H1 (cell line): ENCODE measurements at regions of chr11 and their contacts with region 1.

Region 1: GRCh38 chr11:110479108-110480101 is 49.7 kb downstream of the FDX1 start:
- DNase-seq: no peak
- H3K4me3 ChIP-seq: no peak overlapping the region
- H3K27ac ChIP-seq: no peak overlapping the region
- H3K4me1 ChIP-seq: peaks cover 2 to 3% (median 3%) of the 10 kb centered on the region in 4 experiments; a peak in 6 of 7 replicates
- H3K27me3 ChIP-seq: no peaks in the 10 kb centered on the region
- CTCF ChIP-seq: no peak
- EP300 ChIP-seq: no peak
- POLR2A ChIP-seq: no peak
- RAD21 ChIP-seq: no peak

Region 2: DNA sequence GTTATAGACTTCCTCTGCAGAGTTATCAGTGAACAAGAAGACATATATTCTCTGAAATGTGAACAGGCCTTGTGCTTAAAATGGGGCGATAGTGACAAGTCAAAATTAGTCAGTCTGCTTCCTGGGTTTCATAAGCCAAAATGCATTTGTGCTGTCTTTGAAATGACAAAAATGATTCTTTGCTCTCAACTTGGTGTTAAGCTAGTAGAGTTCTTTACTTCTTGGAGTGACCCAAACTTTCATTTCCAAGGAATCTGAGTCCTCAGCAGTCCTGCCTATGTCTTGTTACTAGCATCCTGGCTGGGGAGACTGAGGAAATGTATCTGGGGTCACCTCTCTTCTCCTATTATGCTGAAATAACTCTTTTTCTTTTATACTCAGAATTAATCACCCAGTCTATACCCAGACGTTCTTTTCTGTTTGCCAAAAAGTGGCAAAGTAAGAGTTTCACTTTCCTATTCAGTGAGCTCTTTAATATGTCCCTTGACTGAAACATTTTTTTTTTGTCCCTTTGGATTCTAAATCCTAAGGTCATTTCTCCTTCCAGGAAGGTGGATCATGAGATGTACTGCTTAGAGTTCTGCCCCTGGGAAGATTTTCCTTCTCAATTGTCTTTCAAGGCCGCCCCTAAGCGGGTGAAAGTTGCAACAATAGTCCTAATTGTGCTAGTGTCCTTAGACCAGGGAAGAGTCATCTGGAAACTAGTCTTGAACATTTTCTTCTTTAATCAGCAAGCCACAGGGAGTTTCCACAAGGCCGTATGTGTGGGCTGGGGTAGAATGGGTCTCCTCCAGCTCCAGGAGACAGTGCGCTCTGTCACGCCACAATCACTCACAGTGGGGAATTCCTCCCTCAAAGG is 130.0 kb before region 1 on chr11:
- CTCF ChIA-PET with region 1: no interaction called
- POLR2A ChIA-PET with region 1: no interaction called
- DNase-seq: no peak
- H3K4me3 ChIP-seq: no peak overlapping the region
- H3K27ac ChIP-seq: no peak overlapping the region
- H3K4me1 ChIP-seq: no peaks in the 10 kb centered on the region
- H3K27me3 ChIP-seq: no peaks in the 10 kb centered on the region
- CTCF ChIP-seq: no peak
- EP300 ChIP-seq: no peak
- POLR2A ChIP-seq: no peak
- RAD21 ChIP-seq: no peak

Region 3: GRCh38 chr11:110455718-110456117 is 23.7 kb before region 1 on chr11:
- CTCF ChIA-PET with region 1: interaction called, 15 read pairs
- POLR2A ChIA-PET with region 1: no interaction called
- DNase-seq: no peak
- H3K4me3 ChIP-seq: no peak overlapping the region
- H3K27ac ChIP-seq: no peak overlapping the region
- H3K4me1 ChIP-seq: no peaks in the 10 kb centered on the region
- H3K27me3 ChIP-seq: no peaks in the 10 kb centered on the region
- CTCF ChIP-seq: no peak
- EP300 ChIP-seq: no peak
- POLR2A ChIP-seq: no peak
- RAD21 ChIP-seq: no peak

Region 4: DNA sequence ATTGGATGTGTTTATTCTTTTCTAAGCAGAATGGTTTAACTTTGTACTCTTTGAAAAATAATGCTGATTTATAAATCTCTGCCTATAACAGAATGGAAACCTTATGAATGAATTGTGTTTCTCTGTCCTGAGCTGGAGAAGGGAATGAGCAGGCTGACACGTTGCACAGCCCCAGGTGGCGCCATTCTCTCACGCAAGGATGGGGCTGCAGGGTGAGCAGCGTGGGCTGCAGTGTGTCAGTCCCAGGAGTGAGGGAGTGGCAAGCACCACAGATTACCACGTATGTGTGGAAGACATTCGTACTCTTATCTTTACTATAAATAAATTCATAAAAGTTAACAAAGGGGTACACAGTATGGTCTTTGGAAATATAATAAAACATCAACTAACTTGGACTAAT is 16.3 kb before region 1 on chr11:
- CTCF ChIA-PET with region 1: interaction called, 39 read pairs
- POLR2A ChIA-PET with region 1: no interaction called
- DNase-seq: peak; percentile 17 to 65
- H3K4me3 ChIP-seq: no peak overlapping the region
- H3K27ac ChIP-seq: no peak overlapping the region
- H3K4me1 ChIP-seq: no peaks in the 10 kb centered on the region
- H3K27me3 ChIP-seq: no peaks in the 10 kb centered on the region
- CTCF ChIP-seq: peak; percentile 63 to 80 (median 76)
- EP300 ChIP-seq: no peak
- POLR2A ChIP-seq: no peak
- RAD21 ChIP-seq: peak; percentile 82 to 87

Region 5: DNA sequence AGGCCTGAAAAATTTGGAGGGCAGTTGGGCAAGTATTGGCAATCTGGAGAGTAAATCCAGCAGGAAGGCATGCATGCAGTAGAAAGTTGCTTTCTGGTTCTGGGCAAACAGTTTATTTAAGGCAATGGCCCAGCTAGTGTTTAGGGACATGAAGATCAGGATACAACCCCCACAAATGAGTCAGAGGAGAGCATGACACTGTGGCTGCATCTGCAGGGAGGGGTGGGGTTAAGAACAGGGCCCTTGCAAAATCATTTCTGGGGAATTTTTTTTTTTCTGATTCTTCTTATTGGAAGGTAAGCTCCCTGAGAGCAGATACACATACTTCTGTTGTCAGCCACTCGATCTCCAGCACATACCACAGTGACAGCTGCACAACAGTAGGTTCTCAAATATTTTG is 11.5 kb after region 1 on chr11:
- CTCF ChIA-PET with region 1: interaction called, 29 read pairs
- POLR2A ChIA-PET with region 1: no interaction called
- DNase-seq: no peak
- H3K4me3 ChIP-seq: no peak overlapping the region
- H3K27ac ChIP-seq: no peak overlapping the region
- H3K4me1 ChIP-seq: peaks cover 0 to 7% (median 5%) of the 10 kb centered on the region in 4 experiments; a peak in 6 of 7 replicates
- H3K27me3 ChIP-seq: no peaks in the 10 kb centered on the region
- CTCF ChIP-seq: no peak
- EP300 ChIP-seq: no peak
- POLR2A ChIP-seq: no peak
- RAD21 ChIP-seq: no peak

Region 6: DNA sequence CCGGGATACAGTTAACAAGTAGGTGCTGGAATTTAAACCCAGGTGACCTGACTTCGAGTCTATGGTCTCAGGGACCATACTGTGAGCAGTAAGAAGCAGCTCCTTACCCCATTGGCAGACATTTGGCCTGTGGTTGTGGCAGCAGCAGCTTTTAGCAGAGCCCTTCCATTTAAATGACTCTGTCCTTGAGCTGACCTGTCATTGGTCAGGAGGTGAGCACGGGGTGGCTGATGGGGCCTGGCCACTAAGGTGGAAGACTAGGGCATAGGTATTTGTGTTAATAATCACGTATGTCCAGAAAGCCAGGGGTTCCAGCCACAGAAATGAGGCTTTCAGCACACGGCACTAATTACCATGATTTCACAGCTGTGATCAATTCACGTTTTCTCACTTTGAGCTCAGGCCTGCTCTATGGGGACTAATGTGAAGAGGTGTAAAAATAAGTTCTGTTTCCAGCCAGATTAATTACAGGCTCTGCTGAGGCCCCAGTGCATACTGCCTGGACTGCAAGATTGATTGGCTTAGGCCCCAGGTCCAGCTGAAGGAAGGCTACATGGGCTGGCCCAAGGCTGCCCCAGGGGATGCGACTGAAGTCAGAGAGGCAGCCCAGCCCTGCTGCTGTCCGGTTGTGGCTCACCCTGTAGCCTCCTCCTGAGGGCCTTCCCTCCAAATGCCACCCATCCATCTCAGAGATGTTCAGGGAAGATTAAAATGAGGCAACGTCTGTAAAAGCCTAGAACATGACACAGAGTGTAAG is 26.3 kb after region 1 on chr11:
- CTCF ChIA-PET with region 1: interaction called, 10 read pairs
- POLR2A ChIA-PET with region 1: no interaction called
- DNase-seq: no peak
- H3K4me3 ChIP-seq: no peak overlapping the region
- H3K27ac ChIP-seq: no peak overlapping the region
- H3K4me1 ChIP-seq: no peaks in the 10 kb centered on the region
- H3K27me3 ChIP-seq: no peaks in the 10 kb centered on the region
- CTCF ChIP-seq: no peak
- EP300 ChIP-seq: no peak
- POLR2A ChIP-seq: no peak
- RAD21 ChIP-seq: no peak

Region 7: GRCh38 chr11:110529043-110529442 is 49.6 kb after region 1 on chr11:
- CTCF ChIA-PET with region 1: interaction called, 10 read pairs
- POLR2A ChIA-PET with region 1: no interaction called
- DNase-seq: no peak
- H3K4me3 ChIP-seq: no peak overlapping the region
- H3K27ac ChIP-seq: no peak overlapping the region
- H3K4me1 ChIP-seq: no peaks in the 10 kb centered on the region
- H3K27me3 ChIP-seq: no peaks in the 10 kb centered on the region
- CTCF ChIP-seq: peak; percentile 40 to 63 (median 61)
- EP300 ChIP-seq: no peak
- POLR2A ChIP-seq: no peak
- RAD21 ChIP-seq: peak; percentile 44 to 60; a peak in 3 of 4 replicates

Region 8: GRCh38 chr11:110772863-110773262 is 293.5 kb after region 1 on chr11:
- CTCF ChIA-PET with region 1: no interaction called
- POLR2A ChIA-PET with region 1: no interaction called
- DNase-seq: no peak
- H3K4me3 ChIP-seq: no peak overlapping the region
- H3K27ac ChIP-seq: no peak overlapping the region
- H3K4me1 ChIP-seq: no peaks in the 10 kb centered on the region
- H3K27me3 ChIP-seq: no peaks in the 10 kb centered on the region
- CTCF ChIP-seq: peak in 1 of 3 experiments; percentile 7; a peak in 1 of 4 replicates
- EP300 ChIP-seq: no peak
- POLR2A ChIP-seq: no peak
- RAD21 ChIP-seq: peak; percentile 25 to 26; a peak in 3 of 4 replicates

Region 9: GRCh38 chr11:111429066-111429506 is 949.7 kb after region 1 on chr11:
- CTCF ChIA-PET with region 1: interaction called, 10 read pairs
- POLR2A ChIA-PET with region 1: no interaction called
- DNase-seq: peak in 1 of 2 experiments; percentile 83
- H3K4me3 ChIP-seq: no peak overlapping the region
- H3K27ac ChIP-seq: no peak overlapping the region
- H3K4me1 ChIP-seq: peaks cover 0 to 3% (median 0%) of the 10 kb centered on the region in 4 experiments; a peak in 1 of 7 replicates
- H3K27me3 ChIP-seq: no peaks in the 10 kb centered on the region
- CTCF ChIP-seq: peak; percentile 12 to 97 (median 85)
- EP300 ChIP-seq: no peak
- POLR2A ChIP-seq: no peak
- RAD21 ChIP-seq: peak; percentile 55 to 65